Activated naive CD4-positive, alpha-beta T cell treated with anti-CD3 and anti-CD28 coated beads for 36 hours (primary cell): ENCODE measurements at regions of chr15 and their contacts with region 1.

Region 1: DNA sequence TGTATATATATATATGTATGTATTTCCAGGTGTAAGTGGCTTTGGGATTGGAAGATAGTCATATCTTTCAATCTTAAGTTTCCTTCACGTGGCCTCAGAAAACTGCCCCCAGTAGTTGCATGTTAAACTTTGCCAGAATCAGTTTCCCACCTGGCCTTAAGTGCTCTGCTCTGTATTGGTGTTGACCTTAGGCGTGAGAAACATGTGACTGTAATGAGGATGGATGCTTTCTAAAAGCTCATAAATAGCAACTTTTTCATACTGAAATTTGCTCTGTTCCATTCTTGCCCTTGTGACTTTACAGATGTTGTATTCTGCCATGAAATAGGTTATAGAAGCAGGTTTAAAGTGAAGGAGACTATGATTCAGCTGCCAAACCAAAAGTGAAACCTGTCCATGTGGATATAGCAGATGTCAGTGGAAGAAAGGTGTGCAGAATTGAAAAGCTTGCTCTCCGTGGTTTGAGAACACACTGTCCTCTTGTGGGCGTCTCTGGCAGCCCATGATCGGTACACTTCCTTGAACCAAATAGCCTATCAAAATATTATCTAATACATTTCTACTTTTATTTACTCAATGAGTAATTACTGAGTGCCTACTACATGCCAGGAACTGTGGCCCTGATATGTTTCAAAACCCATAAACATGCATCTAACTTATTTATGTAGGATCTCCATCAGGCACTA is 15.8 kb downstream of the SCG5 start:
- DNase-seq: no peak
- H3K4me3 Mint-ChIP-seq: no peak overlapping the region
- H3K27ac Mint-ChIP-seq: no peak overlapping the region
- H3K4me1 Mint-ChIP-seq: peaks cover 4% of the 10 kb centered on the region
- H3K27me3 Mint-ChIP-seq: no peaks in the 10 kb centered on the region

Region 2: GRCh38 chr15:32706704-32707103 is 49.4 kb after region 1 on chr15:
- CTCF ChIA-PET with region 1: no interaction called
- intact Hi-C with region 1: no loop called
- DNase-seq: no peak
- H3K4me3 Mint-ChIP-seq: no peak overlapping the region
- H3K27ac Mint-ChIP-seq: no peak overlapping the region
- H3K4me1 Mint-ChIP-seq: no peaks in the 10 kb centered on the region
- H3K27me3 Mint-ChIP-seq: peaks cover 26% of the 10 kb centered on the region

Region 3: DNA sequence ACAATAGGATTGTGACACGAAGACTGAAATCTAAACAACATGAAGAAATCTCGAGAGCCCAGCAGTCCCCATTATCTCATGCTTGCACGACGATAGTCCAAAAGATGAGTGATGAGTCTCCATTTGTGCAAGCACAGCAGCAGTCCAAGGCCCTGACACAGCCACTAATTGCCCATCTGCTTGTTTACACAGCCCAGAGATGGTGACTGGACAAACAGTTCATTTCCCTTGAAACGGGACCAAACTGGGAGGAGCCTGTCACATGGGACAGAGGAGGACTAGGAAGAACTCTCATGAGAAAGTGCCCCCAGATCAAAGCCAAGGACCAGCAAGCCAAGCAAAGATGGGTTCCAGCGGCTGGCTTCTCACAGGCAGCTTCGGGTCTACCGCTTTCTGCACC is 181.5 kb after region 1 on chr15:
- CTCF ChIA-PET with region 1: no interaction called
- intact Hi-C with region 1: loop called (anchors 10 kb)
- DNase-seq: no peak
- H3K4me3 Mint-ChIP-seq: no peak overlapping the region
- H3K27ac Mint-ChIP-seq: no peak overlapping the region
- H3K4me1 Mint-ChIP-seq: no peaks in the 10 kb centered on the region
- H3K27me3 Mint-ChIP-seq: peaks cover 11% of the 10 kb centered on the region

Region 4: GRCh38 chr15:32956006-32956405 is 298.7 kb after region 1 on chr15:
- CTCF ChIA-PET with region 1: interaction called, 5 read pairs
- intact Hi-C with region 1: loop called (anchors 5 kb)
- DNase-seq: no peak
- H3K4me3 Mint-ChIP-seq: no peak overlapping the region
- H3K27ac Mint-ChIP-seq: no peak overlapping the region
- H3K4me1 Mint-ChIP-seq: no peaks in the 10 kb centered on the region
- H3K27me3 Mint-ChIP-seq: peaks cover 13% of the 10 kb centered on the region

Region 5: DNA sequence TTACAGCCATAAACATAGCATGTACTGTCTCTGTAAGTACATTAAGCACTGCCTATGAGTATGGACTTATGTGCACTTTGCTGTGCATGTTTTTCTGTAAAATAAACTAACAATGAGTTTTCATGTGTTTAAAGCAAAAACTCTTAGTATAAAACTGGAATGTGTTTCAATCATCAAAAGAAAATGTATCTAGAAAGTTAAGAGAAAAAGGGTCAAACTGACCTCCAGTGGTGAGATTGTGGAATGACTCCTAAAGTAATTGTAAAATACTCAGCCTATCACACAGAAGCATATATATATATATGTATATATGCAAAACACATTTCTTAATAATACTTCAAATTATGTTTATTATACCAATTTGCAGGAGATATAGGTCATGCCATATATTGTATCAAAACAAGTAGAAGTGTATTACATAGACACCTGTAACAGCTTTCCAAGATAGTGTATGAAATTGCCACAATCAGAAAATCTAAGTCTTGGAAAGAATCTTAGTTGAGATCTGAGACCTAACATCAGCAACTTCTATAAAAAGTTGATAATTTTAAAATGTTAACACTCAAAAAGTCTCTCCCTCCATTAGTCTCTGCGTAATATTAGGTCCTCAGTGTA is 337.6 kb after region 1 on chr15:
- CTCF ChIA-PET with region 1: interaction called, 34 read pairs
- intact Hi-C with region 1: loop called (anchors 1 kb)
- DNase-seq: no peak
- H3K4me3 Mint-ChIP-seq: no peak overlapping the region
- H3K27ac Mint-ChIP-seq: no peak overlapping the region
- H3K4me1 Mint-ChIP-seq: no peaks in the 10 kb centered on the region
- H3K27me3 Mint-ChIP-seq: peaks cover 11% of the 10 kb centered on the region

Region 6: GRCh38 chr15:33067941-33068481 is 410.7 kb after region 1 on chr15:
- CTCF ChIA-PET with region 1: no interaction called
- intact Hi-C with region 1: loop called (anchors 10 kb)
- DNase-seq: peak; percentile 10
- H3K4me3 Mint-ChIP-seq: peak overlapping the region; percentile 22
- H3K27ac Mint-ChIP-seq: no peak overlapping the region
- H3K4me1 Mint-ChIP-seq: peaks cover 9% of the 10 kb centered on the region
- H3K27me3 Mint-ChIP-seq: peaks cover 5% of the 10 kb centered on the region

Region 7: DNA sequence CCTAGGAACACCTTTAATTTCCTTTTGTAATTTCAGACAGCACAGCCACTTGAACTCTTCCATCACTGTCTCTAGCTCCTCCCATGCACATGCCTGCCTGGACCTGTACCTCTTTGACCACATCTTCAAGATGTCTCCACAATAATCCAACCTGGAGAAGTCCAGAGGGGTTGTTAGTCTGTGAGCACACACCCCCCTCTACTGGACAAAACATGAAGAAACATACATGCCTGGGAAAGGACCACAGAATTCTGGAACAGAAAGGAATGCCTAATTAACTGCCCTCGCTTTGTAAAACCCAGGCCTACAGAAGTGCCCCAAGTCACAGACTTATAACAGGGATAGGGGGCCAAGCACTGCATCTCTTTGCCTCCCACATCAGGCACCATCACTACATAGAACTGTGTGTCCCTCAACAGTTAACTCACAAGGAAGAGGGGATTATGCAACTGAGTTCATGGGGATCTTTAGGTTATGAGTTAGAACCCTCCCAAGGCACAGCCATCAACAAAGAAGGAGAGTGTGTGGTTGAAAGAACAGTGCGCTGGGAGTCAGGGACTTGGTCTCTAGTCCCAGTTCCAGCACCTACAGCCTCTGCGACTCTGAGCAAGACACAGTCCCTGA is 475.5 kb after region 1 on chr15:
- CTCF ChIA-PET with region 1: interaction called, 4 read pairs
- intact Hi-C with region 1: loop called (anchors 10 kb)
- DNase-seq: no peak
- H3K4me3 Mint-ChIP-seq: no peak overlapping the region
- H3K27ac Mint-ChIP-seq: no peak overlapping the region
- H3K4me1 Mint-ChIP-seq: peaks cover 2% of the 10 kb centered on the region
- H3K27me3 Mint-ChIP-seq: peaks cover 3% of the 10 kb centered on the region

Region 8: GRCh38 chr15:33476076-33476475 is 818.7 kb after region 1 on chr15:
- CTCF ChIA-PET with region 1: no interaction called
- intact Hi-C with region 1: no loop called
- DNase-seq: no peak
- H3K4me3 Mint-ChIP-seq: no peak overlapping the region
- H3K27ac Mint-ChIP-seq: no peak overlapping the region
- H3K4me1 Mint-ChIP-seq: no peaks in the 10 kb centered on the region
- H3K27me3 Mint-ChIP-seq: peaks cover 2% of the 10 kb centered on the region